Naive thymus-derived CD4-positive, alpha-beta T cell (primary cell): ENCODE measurements at regions of chr1 and their contacts with region 1.

Region 1: GRCh38 chr1:109814993-109815786 is 51.5 kb upstream of the EPS8L3 start:
- DNase-seq: no peak
- ATAC-seq: no peak
- H3K4me3 ChIP-seq: no peak overlapping the region
- H3K4me3 Mint-ChIP-seq: peak overlapping the region in 1 of 10 donors; percentile 28
- H3K27ac ChIP-seq: no peak overlapping the region
- H3K27ac Mint-ChIP-seq: peak overlapping the region in 2 of 9 donors; percentile 44 to 58
- H3K4me1 ChIP-seq: no peaks in the 10 kb centered on the region
- H3K4me1 Mint-ChIP-seq: peaks cover 4 to 32% (median 18%) of the 10 kb centered on the region in 7 donors
- H3K27me3 ChIP-seq: no peaks in the 10 kb centered on the region
- H3K27me3 Mint-ChIP-seq: peaks cover 0 to 8% (median 0%) of the 10 kb centered on the region in 5 donors

Region 2: GRCh38 chr1:109620841-109621286 is 194.3 kb before region 1 on chr1:
- CTCF ChIA-PET with region 1: no interaction called
- POLR2A ChIA-PET with region 1: no interaction called
- intact Hi-C with region 1: no loop called
- DNase-seq: peak; percentile 92 to 98 (median 95)
- ATAC-seq: peak; percentile 90
- H3K4me3 ChIP-seq: peak overlapping the region; percentile 78
- H3K4me3 Mint-ChIP-seq: peak overlapping the region; percentile 90 to 98 (median 94)
- H3K27ac ChIP-seq: peak overlapping the region; percentile 90
- H3K27ac Mint-ChIP-seq: peak overlapping the region; percentile 92 to 98 (median 96)
- H3K4me1 ChIP-seq: peaks cover 14 to 43% of the 10 kb centered on the region in 2 donors
- H3K4me1 Mint-ChIP-seq: peaks cover 52 to 79% (median 68%) of the 10 kb centered on the region in 7 donors
- H3K27me3 ChIP-seq: no peaks in the 10 kb centered on the region
- H3K27me3 Mint-ChIP-seq: no peaks in the 10 kb centered on the region

Region 3: DNA sequence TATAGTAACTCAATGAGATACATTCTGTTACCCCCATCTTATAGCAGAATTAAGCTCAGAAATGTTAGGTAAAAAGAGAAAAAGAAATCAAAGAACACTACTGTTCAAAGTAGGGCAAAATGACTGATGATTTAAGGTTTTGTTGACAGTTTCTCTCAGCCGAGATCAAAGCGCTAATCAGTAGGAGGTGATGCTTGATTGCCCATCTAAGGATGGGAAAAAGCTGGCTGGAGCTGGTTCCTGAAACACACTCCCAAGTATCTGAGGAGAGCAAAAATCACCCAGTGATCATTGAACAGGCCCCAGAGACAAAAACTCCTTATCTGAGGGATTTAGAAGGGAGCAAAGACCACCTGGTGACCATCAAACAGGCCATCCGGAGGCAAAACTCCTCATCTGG is 31.0 kb after region 1 on chr1:
- CTCF ChIA-PET with region 1: no interaction called
- POLR2A ChIA-PET with region 1: no interaction called
- intact Hi-C with region 1: loop called in 1 of 2 experiments (anchors 5 kb)
- DNase-seq: no peak
- ATAC-seq: no peak
- H3K4me3 ChIP-seq: no peak overlapping the region
- H3K4me3 Mint-ChIP-seq: no peak overlapping the region
- H3K27ac ChIP-seq: no peak overlapping the region
- H3K27ac Mint-ChIP-seq: no peak overlapping the region
- H3K4me1 ChIP-seq: no peaks in the 10 kb centered on the region
- H3K4me1 Mint-ChIP-seq: peaks cover 0 to 7% (median 0%) of the 10 kb centered on the region in 7 donors
- H3K27me3 ChIP-seq: no peaks in the 10 kb centered on the region
- H3K27me3 Mint-ChIP-seq: peaks cover 0 to 3% (median 0%) of the 10 kb centered on the region in 5 donors